RWPE1 (cell line): ENCODE measurements at regions of chr12 and their contacts with region 1.

Region 1: DNA sequence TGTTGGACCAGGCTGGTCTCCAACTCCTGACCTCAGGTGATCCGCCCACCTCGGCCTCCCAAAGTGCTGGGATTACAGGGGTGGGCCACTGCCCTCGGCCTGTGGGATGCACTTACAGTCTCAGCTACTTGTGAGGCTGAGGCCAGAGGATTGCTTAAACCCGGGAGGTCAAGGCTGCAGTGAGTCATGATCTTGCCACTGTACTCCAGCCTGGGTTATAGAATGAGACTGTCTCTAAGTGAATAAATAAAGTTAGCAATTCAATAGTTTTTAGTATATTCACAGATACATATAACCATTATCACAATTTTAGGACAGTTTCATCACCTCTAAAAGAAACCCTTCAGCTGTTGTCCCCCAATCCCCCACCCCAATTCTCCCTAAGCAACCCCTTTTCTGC is 61.1 kb downstream of the HCAR2 start:
- DNase-seq: no peak
- H3K27ac ChIP-seq: no peak overlapping the region
- CTCF ChIP-seq: no peak

Region 2: GRCh38 chr12:122167356-122167925 is 474.6 kb before region 1 on chr12:
- CTCF ChIA-PET with region 1: no interaction called
- POLR2A ChIA-PET with region 1: no interaction called
- DNase-seq: no peak
- H3K27ac ChIP-seq: no peak overlapping the region
- CTCF ChIP-seq: no peak

Region 3: GRCh38 chr12:122752464-122753318 is 110.7 kb after region 1 on chr12 and contains the start of gene DENR:
- CTCF ChIA-PET with region 1: interaction called, 12 read pairs
- POLR2A ChIA-PET with region 1: no interaction called
- DNase-seq: peak; percentile 96
- H3K27ac ChIP-seq: peak within 1 kb of the TSS; percentile 82
- CTCF ChIP-seq: peak; percentile 94